IMR-90 (cell line): ENCODE measurements at regions of chr9 and their contacts with region 1.

Region 1: GRCh38 chr9:78261403-78262001 is 25.6 kb downstream of the CEP78 start:
- DNase-seq: peak; percentile 55
- ATAC-seq: peak; percentile 78
- H3K4me3 ChIP-seq: no peak overlapping the region
- H3K27ac ChIP-seq: no peak overlapping the region
- H3K4me1 ChIP-seq: no peaks in the 10 kb centered on the region
- H3K27me3 ChIP-seq: no peaks in the 10 kb centered on the region
- CTCF ChIP-seq: peak; percentile 63
- POLR2A ChIP-seq: no peak
- RAD21 ChIP-seq: peak; percentile 55

Region 2: GRCh38 chr9:78127279-78128225 is 133.9 kb before region 1 on chr9:
- CTCF ChIA-PET with region 1: no interaction called
- POLR2A ChIA-PET with region 1: no interaction called
- dilution Hi-C with region 1: no loop called
- in situ Hi-C with region 1: no loop called
- intact Hi-C with region 1: no loop called
- DNase-seq: no peak
- ATAC-seq: no peak
- H3K4me3 ChIP-seq: no peak overlapping the region
- H3K27ac ChIP-seq: no peak overlapping the region
- H3K4me1 ChIP-seq: no peaks in the 10 kb centered on the region
- H3K27me3 ChIP-seq: peaks cover 9% of the 10 kb centered on the region
- CTCF ChIP-seq: no peak
- POLR2A ChIP-seq: no peak
- RAD21 ChIP-seq: no peak

Region 3: GRCh38 chr9:78369639-78370219 is 108.2 kb after region 1 on chr9:
- CTCF ChIA-PET with region 1: interaction called, 3 read pairs
- POLR2A ChIA-PET with region 1: no interaction called
- dilution Hi-C with region 1: no loop called
- in situ Hi-C with region 1: no loop called
- intact Hi-C with region 1: loop called (anchors 1 kb)
- DNase-seq: peak; percentile 69
- ATAC-seq: peak; percentile 91
- H3K4me3 ChIP-seq: no peak overlapping the region
- H3K27ac ChIP-seq: no peak overlapping the region
- H3K4me1 ChIP-seq: no peaks in the 10 kb centered on the region
- H3K27me3 ChIP-seq: peaks cover 10% of the 10 kb centered on the region
- CTCF ChIP-seq: peak; percentile 72
- POLR2A ChIP-seq: no peak
- RAD21 ChIP-seq: peak; percentile 47